PC-9 (cell line): ENCODE measurements at regions of chr16 and their contacts with region 1.

Region 1: DNA sequence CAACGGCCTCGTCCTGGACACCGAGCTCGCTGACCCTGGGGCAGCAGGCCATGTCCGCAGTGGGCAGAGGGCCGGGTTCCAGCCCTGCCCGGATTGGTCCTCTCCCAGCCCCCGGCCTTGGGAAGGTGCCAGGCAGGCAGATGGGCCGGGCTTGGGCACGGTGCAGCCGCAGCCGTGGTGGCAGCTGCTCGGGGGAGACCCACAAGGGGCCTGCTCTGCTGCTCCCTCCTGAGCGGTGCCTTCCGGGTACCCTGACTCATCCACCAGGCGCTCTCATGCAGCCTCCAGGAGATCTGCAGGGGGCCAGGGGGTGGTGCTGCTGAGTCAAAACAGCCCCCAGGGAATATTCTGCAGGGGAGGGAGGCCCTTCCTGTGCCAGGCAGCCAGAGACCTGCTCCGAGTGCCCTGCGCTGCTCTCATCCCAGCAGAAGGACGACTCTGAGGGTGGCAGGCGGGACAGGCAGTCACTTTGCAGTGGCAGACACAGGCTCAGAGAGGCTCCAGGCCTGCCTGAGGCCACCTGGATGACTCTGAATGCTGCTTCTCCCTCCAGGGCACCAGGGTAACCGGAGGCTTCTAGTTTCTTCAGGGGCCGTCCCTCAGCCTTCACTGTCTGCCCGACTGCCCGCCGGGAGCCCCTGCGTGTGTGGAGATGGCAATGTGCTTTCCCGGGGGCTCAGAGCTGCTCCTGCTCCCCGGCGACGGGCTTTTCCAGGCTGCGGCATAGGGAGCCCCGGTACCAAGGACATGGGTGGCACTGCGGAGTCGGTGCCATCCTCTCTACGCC is 51.7 kb downstream of the CBFA2T3 start:
- DNase-seq: peak; percentile 80 to 91
- H3K4me3 ChIP-seq: peak overlapping the region; percentile 33; the same call in 1 of the 2 replicates
- H3K27ac ChIP-seq: no peak overlapping the region
- H3K4me1 ChIP-seq: peaks cover 38% of the 10 kb centered on the region
- H3K27me3 ChIP-seq: no peaks in the 10 kb centered on the region
- CTCF ChIP-seq: peak; percentile 60; the same call in 1 of the 2 replicates

Region 2: DNA sequence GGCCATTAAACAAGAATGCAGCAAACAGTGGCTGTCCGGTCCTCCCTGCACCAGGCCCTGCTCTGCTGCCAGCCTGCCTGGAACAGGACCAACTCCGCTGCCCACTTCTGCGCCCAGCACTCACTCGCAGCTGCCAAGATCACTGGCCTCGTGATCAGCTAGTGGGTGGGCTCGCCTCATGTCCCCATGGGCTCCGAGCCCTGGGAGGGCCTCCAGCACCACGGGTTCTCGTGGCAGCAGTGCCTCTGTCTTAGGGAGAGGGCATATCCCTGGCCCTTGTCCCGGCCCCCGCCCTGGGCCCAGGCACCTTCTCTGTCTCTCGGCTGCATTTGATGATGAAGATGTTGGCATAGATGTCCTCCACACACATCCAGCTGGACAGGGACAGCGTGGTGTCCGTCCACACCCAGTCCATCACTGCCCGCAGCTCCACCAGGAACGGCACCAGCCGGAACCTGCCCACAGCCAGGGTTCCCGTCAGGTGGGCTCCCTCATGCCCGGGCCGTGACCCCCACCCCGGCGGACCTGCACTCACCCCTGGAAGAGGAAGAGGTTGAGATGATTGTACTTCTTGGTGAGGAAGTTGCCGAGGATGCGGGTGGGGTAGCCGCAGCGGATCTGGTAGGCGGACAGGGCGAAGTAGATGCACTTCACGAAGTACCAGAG is 205.9 kb before region 1 on chr16:
- CTCF ChIA-PET with region 1: no interaction called
- POLR2A ChIA-PET with region 1: no interaction called
- intact Hi-C with region 1: no loop called
- DNase-seq: no peak
- H3K4me3 ChIP-seq: no peak overlapping the region
- H3K27ac ChIP-seq: no peak overlapping the region
- H3K4me1 ChIP-seq: no peaks in the 10 kb centered on the region
- H3K27me3 ChIP-seq: no peaks in the 10 kb centered on the region
- CTCF ChIP-seq: no peak

Region 3: DNA sequence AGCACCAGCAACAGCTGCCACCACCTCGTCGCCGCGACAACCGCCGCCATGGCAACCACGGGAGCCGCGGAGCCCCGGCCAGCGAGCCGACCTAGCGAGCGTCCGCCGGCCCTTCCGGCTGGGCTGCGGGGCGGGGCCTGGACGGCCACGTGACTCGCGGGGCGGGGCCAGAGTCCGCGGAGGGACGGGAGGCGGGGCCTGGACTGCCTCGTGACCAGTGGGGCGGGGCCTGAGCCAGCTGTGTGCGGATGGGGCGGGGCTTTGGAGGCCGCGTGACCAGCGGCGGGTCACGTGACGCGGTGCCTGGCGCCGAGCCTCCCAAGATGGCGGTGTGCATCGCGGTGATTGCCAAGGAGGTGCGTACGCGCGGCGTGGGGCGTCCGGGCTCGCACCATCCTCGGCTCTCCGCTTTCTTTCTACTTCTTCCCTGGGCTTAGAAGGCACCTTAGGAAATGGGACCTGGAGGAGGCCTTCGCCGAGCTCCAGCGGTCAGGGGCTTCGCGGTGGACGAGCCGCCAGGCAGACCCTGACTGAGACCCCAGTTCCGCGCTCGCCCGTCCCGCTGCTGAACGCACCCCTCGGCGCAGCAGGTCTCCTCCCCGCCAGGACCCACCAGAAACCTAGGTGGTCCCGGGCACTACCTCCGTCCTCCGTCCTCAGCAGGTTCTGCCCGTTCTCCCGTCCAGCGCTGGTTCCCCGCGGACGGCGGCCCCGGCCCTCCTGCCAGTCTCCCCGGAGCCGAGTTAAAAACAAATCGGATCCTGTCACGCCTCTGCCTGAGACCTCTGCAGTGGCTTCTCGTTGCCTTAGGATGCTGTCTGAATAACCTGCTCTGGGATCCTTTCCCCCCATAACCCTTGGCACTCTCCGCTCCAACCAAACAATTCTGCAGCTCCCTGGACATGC is 68.2 kb before region 1 on chr16 and contains the starts of genes GALNS and TRAPPC2L:
- CTCF ChIA-PET with region 1: no interaction called
- POLR2A ChIA-PET with region 1: no interaction called
- intact Hi-C with region 1: loop called (anchors 10 kb)
- DNase-seq: peak; percentile 77 to 99
- H3K4me3 ChIP-seq: peak within 1 kb of the TSS; percentile 80
- H3K27ac ChIP-seq: no peak within 1 kb of the TSS
- H3K4me1 ChIP-seq: peaks cover 5% of the 10 kb centered on the region
- H3K27me3 ChIP-seq: no peaks in the 10 kb centered on the region
- CTCF ChIP-seq: no peak
- total RNA-seq, gene GALNS: 62.3 and 75.7 TPM in 2 replicates
- total RNA-seq, gene TRAPPC2L: 82.6 and 101 TPM in 2 replicates

Region 4: DNA sequence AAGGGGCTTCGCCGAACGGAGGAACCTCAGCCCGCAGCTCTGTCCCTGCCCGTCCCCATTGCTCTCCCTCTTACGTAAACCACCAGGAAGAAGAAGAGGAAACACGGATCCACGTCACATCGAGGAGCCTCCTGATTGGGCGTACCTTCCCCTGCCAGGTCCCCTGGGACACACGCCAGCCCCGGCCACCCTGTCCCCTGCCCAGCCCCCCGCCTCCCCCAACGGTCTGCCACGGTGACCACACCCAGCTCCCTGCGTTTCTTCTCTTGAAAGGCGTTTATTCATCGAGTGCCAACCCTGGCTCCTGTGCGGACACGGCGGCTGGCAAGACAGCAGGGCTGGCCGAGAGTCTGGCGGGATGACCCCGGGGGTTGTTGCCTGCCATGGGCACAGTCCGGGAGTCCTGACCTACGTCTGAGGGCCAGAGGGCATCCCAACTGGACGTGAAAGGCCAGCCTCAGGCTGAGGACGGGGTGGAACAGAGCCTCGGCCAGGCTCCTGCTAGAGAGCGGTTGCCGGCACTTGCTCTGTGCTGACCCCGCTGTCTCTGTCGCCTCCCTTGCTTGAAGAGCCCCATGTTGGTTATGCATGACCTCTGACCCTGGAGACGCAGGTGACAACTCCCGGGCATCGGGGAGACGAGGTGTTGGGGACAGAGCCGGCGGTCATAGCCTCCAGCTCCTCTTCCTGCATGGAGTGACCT is 127.7 kb after region 1 on chr16:
- CTCF ChIA-PET with region 1: no interaction called
- POLR2A ChIA-PET with region 1: no interaction called
- intact Hi-C with region 1: loop called (anchors 10 kb)
- DNase-seq: peak in 1 of 2 experiments; percentile 71
- H3K4me3 ChIP-seq: no peak overlapping the region
- H3K27ac ChIP-seq: no peak overlapping the region
- H3K4me1 ChIP-seq: no peaks in the 10 kb centered on the region
- H3K27me3 ChIP-seq: peaks cover 67% of the 10 kb centered on the region
- CTCF ChIP-seq: no peak